ENCODE measurements at regions of chr5 and their contacts with region 1.

Region 1: DNA sequence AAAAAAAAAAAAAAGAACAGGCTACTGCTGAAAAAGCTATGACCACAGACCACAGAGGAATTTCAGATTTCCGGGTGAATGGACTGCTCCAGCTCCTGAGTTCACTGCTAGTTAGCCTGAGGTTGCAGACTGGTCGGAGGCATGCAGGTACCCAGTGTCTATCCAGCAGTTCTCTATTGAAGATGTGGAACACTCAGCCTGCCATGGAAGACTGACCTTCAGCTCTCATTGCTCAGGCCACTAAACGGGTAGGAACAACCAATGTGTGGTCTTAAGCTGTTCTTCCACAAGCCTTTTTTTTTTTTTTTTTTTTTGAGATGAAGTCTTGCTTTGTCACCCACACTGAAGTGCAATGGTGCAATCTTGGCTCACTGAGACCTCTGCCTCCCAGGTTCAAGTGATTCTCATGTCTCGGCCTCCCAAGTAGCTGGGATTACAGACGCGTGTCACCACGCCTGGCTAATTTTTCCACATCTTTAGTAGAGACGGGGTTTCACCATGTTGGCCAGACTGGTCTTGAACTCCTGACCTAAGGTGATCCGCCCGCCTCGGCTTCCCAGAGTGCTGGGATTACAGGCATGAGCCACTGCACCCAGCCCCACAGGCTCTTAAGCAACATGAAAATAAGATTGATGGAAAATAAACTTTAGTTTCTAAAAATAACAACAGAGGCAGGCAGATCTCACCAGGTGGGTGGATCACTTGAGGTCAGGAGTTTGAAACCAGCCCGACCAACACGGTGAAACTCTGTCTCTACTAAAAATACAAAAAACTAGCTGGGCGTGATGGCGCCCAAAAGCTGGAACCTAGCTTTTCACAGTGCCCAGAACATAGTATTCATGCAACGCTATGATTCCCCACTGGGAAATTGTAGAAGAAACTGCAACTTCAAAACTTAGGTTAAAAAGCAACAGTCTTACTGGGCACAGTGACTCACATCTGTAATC is 20.0 kb upstream of the NPM1 start:
- DNase-seq: no peak
- H3K4me3 ChIP-seq: no peak overlapping the region
- H3K27ac ChIP-seq: no peak overlapping the region
- H3K27me3 ChIP-seq: peaks cover 7% of the 10 kb centered on the region
- CTCF ChIP-seq: no peak

Region 2: DNA sequence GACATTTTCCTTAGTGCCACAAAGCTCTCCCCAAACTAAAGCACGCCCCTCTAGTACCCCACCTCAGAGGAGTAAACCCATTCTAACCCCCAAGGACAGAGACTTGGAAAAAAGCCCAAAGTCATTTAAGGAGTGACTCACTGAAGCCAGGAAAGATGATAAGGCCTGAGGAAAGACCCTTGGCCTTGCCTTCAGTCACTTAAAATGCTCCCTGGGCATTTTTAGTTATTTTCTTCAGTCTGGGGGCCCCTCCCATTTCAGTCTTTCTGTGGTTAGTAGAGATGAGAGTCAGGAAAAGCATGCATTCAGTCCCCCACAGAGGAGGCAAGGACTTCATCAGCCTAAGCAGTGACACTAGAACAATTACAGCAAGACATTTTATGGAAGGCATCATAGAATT is 72.4 kb before region 1 on chr5:
- CTCF ChIA-PET with region 1: no interaction called
- POLR2A ChIA-PET with region 1: no interaction called
- DNase-seq: no peak
- H3K4me3 ChIP-seq: no peak overlapping the region
- H3K27ac ChIP-seq: no peak overlapping the region
- H3K27me3 ChIP-seq: no peaks in the 10 kb centered on the region
- CTCF ChIP-seq: no peak

Region 3: DNA sequence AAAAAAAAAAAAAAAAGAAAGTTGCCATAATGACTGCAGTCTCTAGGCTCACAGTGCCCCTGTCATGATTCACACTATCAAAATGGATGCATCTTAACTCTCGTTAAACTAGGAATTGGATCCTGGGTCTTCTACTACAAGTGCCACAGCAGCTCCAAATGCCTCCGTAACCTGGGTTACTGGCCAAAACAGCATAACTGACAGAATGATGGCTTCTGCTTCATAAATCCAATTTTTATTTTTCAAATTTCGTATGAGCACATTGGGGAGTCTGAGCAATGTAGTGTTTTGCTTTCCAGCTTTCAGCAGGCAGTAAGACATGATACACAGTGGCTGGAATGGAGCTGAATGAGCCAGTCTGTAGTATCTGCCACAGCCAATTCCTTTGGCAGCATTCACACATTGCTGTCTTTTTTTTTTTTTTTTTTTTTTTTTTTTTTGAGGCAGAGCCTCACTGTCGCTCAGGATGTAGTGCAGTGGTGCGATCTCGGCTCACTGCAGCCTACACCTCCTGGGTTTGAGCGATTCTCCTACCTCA is 16.1 kb before region 1 on chr5:
- CTCF ChIA-PET with region 1: no interaction called
- POLR2A ChIA-PET with region 1: no interaction called
- DNase-seq: no peak
- H3K4me3 ChIP-seq: no peak overlapping the region
- H3K27ac ChIP-seq: no peak overlapping the region
- H3K27me3 ChIP-seq: peaks cover under 1% of the 10 kb centered on the region
- CTCF ChIP-seq: no peak

Region 4: DNA sequence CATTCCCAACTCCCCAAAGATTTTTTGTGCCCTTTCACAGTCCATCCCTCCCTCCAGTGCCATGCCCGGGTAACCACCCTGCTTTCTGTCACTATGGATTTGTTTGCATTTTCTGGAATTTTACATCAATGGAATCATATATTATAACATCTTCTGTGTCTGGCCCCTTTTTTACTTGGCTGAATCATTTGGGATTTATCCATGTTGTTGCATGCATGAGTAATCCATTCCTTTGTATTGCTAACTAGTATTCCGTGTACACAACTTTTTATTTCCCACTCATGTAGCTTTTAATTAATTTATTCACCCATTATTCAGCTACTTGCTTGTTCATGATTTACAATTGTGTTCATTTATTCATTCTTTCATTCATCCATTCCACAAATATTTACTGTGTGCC is 145.9 kb after region 1 on chr5:
- CTCF ChIA-PET with region 1: no interaction called
- POLR2A ChIA-PET with region 1: no interaction called
- DNase-seq: no peak
- H3K4me3 ChIP-seq: no peak overlapping the region
- H3K27ac ChIP-seq: no peak overlapping the region
- H3K27me3 ChIP-seq: peaks cover 2% of the 10 kb centered on the region
- CTCF ChIP-seq: no peak

Region 5: DNA sequence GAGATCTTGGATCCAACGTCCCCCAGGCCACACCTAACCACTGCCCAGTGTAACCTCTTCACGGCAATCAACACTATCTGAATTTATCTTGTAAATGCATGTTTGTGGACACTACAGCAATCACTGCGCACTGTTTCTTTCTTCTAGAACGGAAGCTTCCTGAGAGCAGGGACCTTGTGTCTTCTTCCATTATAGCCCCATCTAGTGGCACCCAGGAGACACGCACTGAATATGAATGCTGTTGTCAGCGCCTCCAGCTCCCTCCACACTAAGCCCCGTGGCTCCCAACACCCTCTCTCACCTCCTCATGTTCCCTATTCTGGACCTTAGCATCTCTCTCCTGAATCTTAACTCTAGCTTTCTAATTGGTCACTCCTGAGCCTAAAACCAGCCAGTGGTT is 490.6 kb after region 1 on chr5:
- CTCF ChIA-PET with region 1: interaction called, 10 read pairs
- POLR2A ChIA-PET with region 1: no interaction called
- DNase-seq: no peak
- H3K4me3 ChIP-seq: no peak overlapping the region
- H3K27ac ChIP-seq: no peak overlapping the region
- H3K27me3 ChIP-seq: no peaks in the 10 kb centered on the region
- CTCF ChIP-seq: peak; percentile 27; the same call in 1 of the 2 replicates